Sigmoid colon (tissue), 7 donors: ENCODE measurements at regions of chr14 and their contacts with region 1.

Region 1: GRCh38 chr14:21109377-21110260 is 8.8 kb downstream of the TMEM253 start:
- DNase-seq: no peak
- H3K4me3 ChIP-seq: no peak overlapping the region
- H3K27ac ChIP-seq: no peak overlapping the region
- H3K4me1 ChIP-seq: peaks cover 0 to 28% (median 22%) of the 10 kb centered on the region in 4 donors
- H3K27me3 ChIP-seq: no peaks in the 10 kb centered on the region
- CTCF ChIP-seq: no peak
- EP300 ChIP-seq: no peak
- POLR2A ChIP-seq: no peak

Region 2: DNA sequence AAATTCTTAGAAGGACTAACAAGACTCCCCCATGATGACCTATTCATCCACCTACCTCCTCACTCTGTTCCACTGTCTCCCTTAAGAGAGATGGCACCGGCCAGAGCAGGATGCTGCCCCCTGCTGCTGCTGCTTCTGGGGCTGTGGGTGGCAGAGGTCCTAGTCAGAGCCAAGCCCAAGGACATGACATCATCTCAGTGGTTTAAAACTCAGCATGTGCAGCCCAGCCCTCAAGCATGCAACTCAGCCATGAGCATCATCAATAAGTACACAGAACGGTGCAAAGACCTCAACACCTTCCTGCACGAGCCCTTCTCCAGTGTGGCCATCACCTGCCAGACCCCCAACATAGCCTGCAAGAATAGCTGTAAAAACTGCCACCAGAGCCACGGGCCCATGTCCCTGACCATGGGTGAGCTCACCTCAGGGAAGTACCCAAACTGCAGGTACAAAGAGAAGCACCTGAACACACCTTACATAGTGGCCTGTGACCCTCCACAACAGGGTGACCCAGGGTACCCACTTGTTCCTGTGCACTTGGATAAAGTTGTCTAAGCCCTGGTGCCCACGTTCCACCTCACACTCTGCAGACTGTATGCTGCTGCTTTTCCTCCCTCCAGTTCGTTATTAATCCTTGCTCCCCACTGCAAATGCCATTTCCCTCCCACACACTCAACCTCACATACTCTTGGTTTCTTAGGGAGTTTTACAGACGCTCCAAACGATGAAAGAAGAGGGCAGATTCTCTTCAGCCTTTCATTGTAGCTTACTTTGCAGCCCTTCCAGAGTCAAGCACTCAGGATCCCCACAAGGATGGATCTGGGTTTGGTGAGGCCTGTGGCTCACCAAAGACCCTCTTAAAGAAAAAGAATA is 51.6 kb before region 1 on chr14 and contains the start of gene RNASE8:
- intact Hi-C with region 1: loop called (anchors 10 kb)
- DNase-seq: no peak
- H3K4me3 ChIP-seq: no peak within 1 kb of the TSS
- H3K27ac ChIP-seq: no peak within 1 kb of the TSS
- H3K4me1 ChIP-seq: peaks cover 0 to 2% (median under 1%) of the 10 kb centered on the region in 4 donors
- H3K27me3 ChIP-seq: no peaks in the 10 kb centered on the region
- CTCF ChIP-seq: no peak
- EP300 ChIP-seq: no peak
- POLR2A ChIP-seq: no peak
- total RNA-seq, gene RNASE8: not detected

Region 3: DNA sequence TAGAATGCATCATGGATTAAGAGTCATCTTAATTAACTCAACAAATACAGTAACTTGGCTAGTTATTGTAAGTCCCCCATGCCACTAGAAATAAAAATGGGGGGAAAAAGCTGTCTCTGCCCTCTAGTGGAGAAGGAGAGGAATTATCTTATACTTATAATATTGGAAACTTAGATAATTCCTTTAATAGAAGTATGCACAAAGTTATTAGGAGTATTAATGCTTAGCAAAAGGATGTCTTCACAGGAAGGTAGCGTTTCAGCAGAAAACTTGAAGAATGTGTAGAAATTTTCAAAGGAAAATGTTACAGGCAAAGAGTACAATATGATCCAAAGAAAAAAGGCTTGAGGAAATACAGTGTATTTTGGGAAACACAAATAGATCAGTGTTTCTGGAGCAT is 26.4 kb after region 1 on chr14:
- intact Hi-C with region 1: no loop called
- DNase-seq: no peak
- H3K4me3 ChIP-seq: no peak overlapping the region
- H3K27ac ChIP-seq: no peak overlapping the region
- H3K4me1 ChIP-seq: no peaks in the 10 kb centered on the region
- H3K27me3 ChIP-seq: no peaks in the 10 kb centered on the region
- CTCF ChIP-seq: peak in 2 of 4 experiments; percentile 14 to 54
- EP300 ChIP-seq: no peak
- POLR2A ChIP-seq: no peak